CD8-positive, alpha-beta T cell (primary cell): ENCODE measurements at regions of chr5 and their contacts with region 1.

Region 1: DNA sequence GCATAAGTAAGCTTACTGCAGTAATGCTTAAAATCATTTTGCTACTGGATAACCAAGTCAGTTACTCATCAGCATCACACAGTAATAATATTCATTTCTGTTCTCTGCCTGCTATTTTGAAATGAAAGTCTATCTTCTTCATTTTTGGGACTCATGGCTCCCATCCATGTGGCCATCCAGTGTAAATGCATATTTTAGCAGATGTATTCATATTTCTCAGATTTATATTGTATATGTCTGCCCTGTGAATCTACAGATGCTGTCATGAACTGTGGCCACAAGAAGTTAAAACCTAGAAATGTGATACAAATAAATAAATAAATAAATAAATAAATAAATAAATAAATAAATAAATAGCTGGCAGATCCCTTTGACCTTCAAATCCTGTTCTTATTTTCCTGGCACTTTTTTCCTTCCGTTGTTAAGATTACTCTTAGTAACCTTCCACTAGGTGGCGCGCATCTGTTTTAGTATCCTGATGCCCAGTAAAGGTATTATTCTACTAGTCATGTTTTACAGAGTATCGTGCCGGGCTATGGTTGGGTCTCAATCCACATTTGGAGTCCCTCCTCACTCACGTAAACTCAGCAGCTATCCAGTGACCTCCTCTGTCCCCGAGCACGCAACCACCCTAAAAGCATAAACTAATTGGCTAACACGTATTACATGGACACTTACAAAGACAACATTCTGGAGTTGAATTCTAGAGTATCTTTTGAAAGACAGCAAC is 79.2 kb upstream of the IL7R start:
- DNase-seq: peak; percentile 40 to 88 (median 81)
- ATAC-seq: peak; percentile 64
- H3K4me3 ChIP-seq: no peak overlapping the region
- H3K4me3 Mint-ChIP-seq: peak overlapping the region; percentile 58
- H3K27ac ChIP-seq: no peak overlapping the region
- H3K27ac Mint-ChIP-seq: peak overlapping the region; percentile 92
- H3K4me1 ChIP-seq: peaks cover 58% of the 10 kb centered on the region
- H3K4me1 Mint-ChIP-seq: peaks cover 68% of the 10 kb centered on the region
- H3K27me3 ChIP-seq: no peaks in the 10 kb centered on the region
- H3K27me3 Mint-ChIP-seq: no peaks in the 10 kb centered on the region
- CTCF ChIP-seq: peak; percentile 79

Region 2: GRCh38 chr5:35089334-35090314 is 687.9 kb before region 1 on chr5:
- CTCF ChIA-PET with region 1: no interaction called
- POLR2A ChIA-PET with region 1: no interaction called
- intact Hi-C with region 1: loop called (anchors 5 to 10 kb)
- DNase-seq: peak; percentile 16 to 68 (median 57)
- ATAC-seq: no peak
- H3K4me3 ChIP-seq: no peak overlapping the region
- H3K4me3 Mint-ChIP-seq: no peak overlapping the region
- H3K27ac ChIP-seq: no peak overlapping the region
- H3K27ac Mint-ChIP-seq: no peak overlapping the region
- H3K4me1 ChIP-seq: no peaks in the 10 kb centered on the region
- H3K4me1 Mint-ChIP-seq: no peaks in the 10 kb centered on the region
- H3K27me3 ChIP-seq: no peaks in the 10 kb centered on the region
- H3K27me3 Mint-ChIP-seq: peaks cover 3% of the 10 kb centered on the region
- CTCF ChIP-seq: peak; percentile 68

Region 3: GRCh38 chr5:35313291-35313690 is 464.2 kb before region 1 on chr5:
- CTCF ChIA-PET with region 1: no interaction called
- POLR2A ChIA-PET with region 1: no interaction called
- intact Hi-C with region 1: no loop called
- DNase-seq: no peak
- ATAC-seq: no peak
- H3K4me3 ChIP-seq: no peak overlapping the region
- H3K4me3 Mint-ChIP-seq: no peak overlapping the region
- H3K27ac ChIP-seq: no peak overlapping the region
- H3K27ac Mint-ChIP-seq: no peak overlapping the region
- H3K4me1 ChIP-seq: no peaks in the 10 kb centered on the region
- H3K4me1 Mint-ChIP-seq: no peaks in the 10 kb centered on the region
- H3K27me3 ChIP-seq: no peaks in the 10 kb centered on the region
- H3K27me3 Mint-ChIP-seq: peaks cover 9% of the 10 kb centered on the region
- CTCF ChIP-seq: no peak

Region 4: GRCh38 chr5:35694481-35694880 is 83.0 kb before region 1 on chr5:
- CTCF ChIA-PET with region 1: no interaction called
- POLR2A ChIA-PET with region 1: no interaction called
- intact Hi-C with region 1: no loop called
- DNase-seq: no peak
- ATAC-seq: no peak
- H3K4me3 ChIP-seq: no peak overlapping the region
- H3K4me3 Mint-ChIP-seq: no peak overlapping the region
- H3K27ac ChIP-seq: no peak overlapping the region
- H3K27ac Mint-ChIP-seq: no peak overlapping the region
- H3K4me1 ChIP-seq: no peaks in the 10 kb centered on the region
- H3K4me1 Mint-ChIP-seq: no peaks in the 10 kb centered on the region
- H3K27me3 ChIP-seq: no peaks in the 10 kb centered on the region
- H3K27me3 Mint-ChIP-seq: no peaks in the 10 kb centered on the region
- CTCF ChIP-seq: no peak

Region 5: DNA sequence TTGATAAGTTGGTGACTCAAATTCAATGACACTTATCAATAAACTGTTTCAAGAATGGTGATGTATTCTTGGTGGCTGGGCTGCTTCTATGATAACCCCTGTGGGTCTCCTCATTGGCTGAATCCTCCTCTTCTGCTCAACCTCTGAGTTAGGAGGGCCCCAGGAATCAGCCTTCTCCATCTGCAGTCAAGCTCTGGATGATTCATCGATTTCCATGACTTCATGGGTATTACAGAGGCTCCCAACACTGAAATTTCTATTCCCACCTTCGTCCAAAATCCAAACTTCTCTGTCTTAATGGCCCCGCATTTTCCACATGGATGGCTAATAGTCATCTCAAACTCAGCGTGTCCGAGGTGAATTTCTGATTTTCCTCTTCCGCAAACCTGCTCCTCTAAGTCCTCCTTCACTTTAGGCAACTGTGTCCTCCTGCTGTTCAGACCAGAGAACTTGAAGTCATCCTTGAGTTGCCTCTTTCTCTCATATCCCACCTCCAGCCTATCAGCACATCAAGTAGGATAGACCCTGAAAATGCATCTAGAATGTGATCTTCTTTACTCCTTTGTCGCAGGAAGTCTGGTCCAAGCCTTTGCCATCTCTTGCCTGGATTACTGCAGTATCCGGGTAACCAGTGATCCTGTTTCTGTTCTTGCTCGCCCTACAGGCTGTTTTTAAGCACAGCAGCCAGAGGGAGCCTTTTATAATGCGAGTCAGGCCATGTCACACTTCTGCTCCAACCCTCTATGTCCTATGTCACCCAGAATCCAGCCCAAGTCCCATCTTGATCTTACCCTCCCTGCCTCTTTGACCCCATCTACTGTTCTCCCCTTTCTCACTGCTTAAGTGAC is 37.8 kb after region 1 on chr5:
- CTCF ChIA-PET with region 1: interaction called, 63 read pairs
- POLR2A ChIA-PET with region 1: interaction called, 7 read pairs
- intact Hi-C with region 1: loop called (anchors 2 to 5 kb)
- DNase-seq: peak in 3 of 9 experiments; percentile 30 to 62 (median 52)
- ATAC-seq: no peak
- H3K4me3 ChIP-seq: no peak overlapping the region
- H3K4me3 Mint-ChIP-seq: no peak overlapping the region
- H3K27ac ChIP-seq: peak overlapping the region in 1 of 2 experiments; percentile 15
- H3K27ac Mint-ChIP-seq: no peak overlapping the region
- H3K4me1 ChIP-seq: peaks cover 69% of the 10 kb centered on the region
- H3K4me1 Mint-ChIP-seq: peaks cover 53% of the 10 kb centered on the region
- H3K27me3 ChIP-seq: no peaks in the 10 kb centered on the region
- H3K27me3 Mint-ChIP-seq: no peaks in the 10 kb centered on the region
- CTCF ChIP-seq: peak; percentile 31

Region 6: DNA sequence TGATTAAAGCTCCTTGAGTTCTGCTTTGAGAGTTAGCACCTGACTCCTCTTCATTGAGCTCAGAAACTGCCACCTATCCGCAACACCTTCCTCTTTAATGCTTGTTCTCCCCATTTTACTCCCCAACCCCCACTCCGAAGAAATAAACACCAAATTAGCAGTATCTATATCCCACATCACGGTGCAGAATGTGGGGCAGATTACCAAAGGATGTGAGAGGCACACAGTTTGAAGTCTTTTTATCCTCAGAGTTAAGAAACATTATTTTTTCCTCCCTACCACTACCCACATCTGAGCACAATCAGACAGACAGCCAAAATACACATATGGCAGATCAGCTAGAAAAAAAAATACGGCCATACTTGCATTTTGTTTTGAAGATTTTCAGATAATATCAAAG is 53.1 kb after region 1 on chr5:
- CTCF ChIA-PET with region 1: interaction called, 4 read pairs
- POLR2A ChIA-PET with region 1: interaction called, 48 read pairs
- intact Hi-C with region 1: no loop called
- DNase-seq: peak in 4 of 9 experiments; percentile 22 to 82 (median 72)
- ATAC-seq: peak; percentile 78
- H3K4me3 ChIP-seq: no peak overlapping the region
- H3K4me3 Mint-ChIP-seq: peak overlapping the region; percentile 63
- H3K27ac ChIP-seq: peak overlapping the region; percentile 1 to 43
- H3K27ac Mint-ChIP-seq: peak overlapping the region; percentile 90
- H3K4me1 ChIP-seq: peaks cover 86% of the 10 kb centered on the region
- H3K4me1 Mint-ChIP-seq: peaks cover 91% of the 10 kb centered on the region
- H3K27me3 ChIP-seq: no peaks in the 10 kb centered on the region
- H3K27me3 Mint-ChIP-seq: no peaks in the 10 kb centered on the region
- CTCF ChIP-seq: no peak

Region 7: DNA sequence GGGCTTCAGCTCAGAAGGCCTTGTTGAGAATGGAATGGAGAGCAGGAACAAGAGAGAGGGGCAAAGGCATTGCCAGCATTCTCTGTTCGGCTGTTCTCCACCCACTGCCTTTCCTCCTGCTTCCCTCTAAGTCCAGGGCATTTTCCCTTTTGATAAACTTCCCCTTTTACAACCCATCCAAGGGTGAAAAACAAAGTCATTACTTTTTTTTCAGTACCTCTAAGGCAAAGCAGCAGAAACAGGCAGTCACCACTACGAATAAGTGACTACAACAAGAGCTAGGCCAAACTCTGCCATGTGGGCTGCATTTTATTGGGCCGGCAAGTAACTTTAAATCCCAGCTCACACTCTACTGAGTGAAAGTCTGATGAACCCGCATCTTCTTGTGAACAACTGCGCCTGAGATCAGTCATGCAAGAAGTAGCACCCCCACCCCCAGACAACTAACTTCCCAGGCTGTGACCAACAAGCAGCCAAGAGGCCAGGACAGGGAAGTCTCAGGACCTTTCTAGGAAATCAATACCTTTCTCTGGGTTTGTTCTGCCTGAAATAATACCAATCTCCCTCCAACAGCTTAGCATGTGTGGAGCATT is 92.3 kb after region 1 on chr5:
- CTCF ChIA-PET with region 1: interaction called, 41 read pairs
- POLR2A ChIA-PET with region 1: interaction called, 28 read pairs
- intact Hi-C with region 1: no loop called
- DNase-seq: no peak
- ATAC-seq: peak; percentile 30
- H3K4me3 ChIP-seq: no peak overlapping the region
- H3K4me3 Mint-ChIP-seq: no peak overlapping the region
- H3K27ac ChIP-seq: peak overlapping the region in 1 of 2 experiments; percentile 17
- H3K27ac Mint-ChIP-seq: peak overlapping the region; percentile 85
- H3K4me1 ChIP-seq: peaks cover 61% of the 10 kb centered on the region
- H3K4me1 Mint-ChIP-seq: peaks cover 87% of the 10 kb centered on the region
- H3K27me3 ChIP-seq: no peaks in the 10 kb centered on the region
- H3K27me3 Mint-ChIP-seq: no peaks in the 10 kb centered on the region
- CTCF ChIP-seq: no peak

Region 8: GRCh38 chr5:35884115-35884788 is 106.7 kb after region 1 on chr5:
- CTCF ChIA-PET with region 1: interaction called, 3 read pairs
- POLR2A ChIA-PET with region 1: interaction called, 46 read pairs
- intact Hi-C with region 1: loop called in 1 of 2 experiments (anchors 5 kb)
- DNase-seq: peak in 2 of 9 experiments; percentile 35 to 57
- ATAC-seq: peak; percentile 47
- H3K4me3 ChIP-seq: no peak overlapping the region
- H3K4me3 Mint-ChIP-seq: peak overlapping the region; percentile 3
- H3K27ac ChIP-seq: peak overlapping the region in 1 of 2 experiments; percentile 44
- H3K27ac Mint-ChIP-seq: peak overlapping the region; percentile 89
- H3K4me1 ChIP-seq: peaks cover 26% of the 10 kb centered on the region
- H3K4me1 Mint-ChIP-seq: peaks cover 47% of the 10 kb centered on the region
- H3K27me3 ChIP-seq: no peaks in the 10 kb centered on the region
- H3K27me3 Mint-ChIP-seq: no peaks in the 10 kb centered on the region
- CTCF ChIP-seq: no peak

Region 9: DNA sequence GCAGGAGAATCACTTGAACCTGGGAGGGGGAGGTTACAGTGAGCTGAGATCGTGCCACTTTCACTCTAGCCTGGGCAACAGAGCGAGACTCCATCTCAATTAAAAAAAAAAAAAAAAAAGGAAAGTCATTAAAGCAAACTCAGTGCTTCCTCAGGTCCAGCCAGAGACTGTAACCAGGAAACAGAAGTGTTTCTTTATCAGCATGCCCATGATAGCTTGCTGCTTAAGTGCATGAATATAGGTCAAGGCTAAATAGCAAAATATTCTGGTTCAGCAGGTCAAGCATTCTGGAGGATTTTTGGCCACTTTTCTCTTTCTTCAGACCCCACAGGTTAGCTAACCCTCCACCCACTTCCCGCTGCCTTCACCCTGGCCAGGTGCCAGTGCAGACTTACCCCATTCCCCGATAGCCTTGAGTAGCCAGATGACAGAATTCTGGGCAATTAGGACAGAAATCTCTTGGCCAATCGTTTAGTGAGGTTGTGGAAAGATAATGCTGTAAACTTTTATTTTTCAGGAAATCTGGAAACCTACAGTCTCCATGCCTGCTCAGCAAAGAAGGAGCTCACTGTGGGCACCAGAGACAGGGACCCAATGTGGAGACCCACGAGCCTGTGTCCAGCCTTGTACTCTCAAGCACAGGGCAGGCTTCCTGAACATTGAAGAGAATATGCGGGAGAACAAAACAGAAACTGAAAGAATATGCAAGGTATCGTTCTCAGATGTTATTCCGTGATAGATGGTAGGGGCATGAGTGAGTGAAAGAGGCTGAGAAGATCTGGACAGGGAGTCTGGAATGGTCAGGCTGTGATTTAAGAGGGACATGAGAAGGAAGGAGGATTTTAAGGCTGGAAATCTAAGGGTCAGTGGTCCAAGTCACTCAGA is 293.4 kb after region 1 on chr5:
- CTCF ChIA-PET with region 1: no interaction called
- POLR2A ChIA-PET with region 1: no interaction called
- intact Hi-C with region 1: no loop called
- DNase-seq: peak in 1 of 9 experiments; percentile 18
- ATAC-seq: no peak
- H3K4me3 ChIP-seq: peak overlapping the region in 1 of 2 experiments; percentile 34
- H3K4me3 Mint-ChIP-seq: peak overlapping the region; percentile 13
- H3K27ac ChIP-seq: no peak overlapping the region
- H3K27ac Mint-ChIP-seq: no peak overlapping the region
- H3K4me1 ChIP-seq: peaks cover 3% of the 10 kb centered on the region
- H3K4me1 Mint-ChIP-seq: peaks cover 6% of the 10 kb centered on the region
- H3K27me3 ChIP-seq: peaks cover 3% of the 10 kb centered on the region in 2 experiments
- H3K27me3 Mint-ChIP-seq: peaks cover 14% of the 10 kb centered on the region
- CTCF ChIP-seq: no peak